HEK293T (cell line): ENCODE measurements at regions of chr2 and their contacts with region 1.

Region 1: DNA sequence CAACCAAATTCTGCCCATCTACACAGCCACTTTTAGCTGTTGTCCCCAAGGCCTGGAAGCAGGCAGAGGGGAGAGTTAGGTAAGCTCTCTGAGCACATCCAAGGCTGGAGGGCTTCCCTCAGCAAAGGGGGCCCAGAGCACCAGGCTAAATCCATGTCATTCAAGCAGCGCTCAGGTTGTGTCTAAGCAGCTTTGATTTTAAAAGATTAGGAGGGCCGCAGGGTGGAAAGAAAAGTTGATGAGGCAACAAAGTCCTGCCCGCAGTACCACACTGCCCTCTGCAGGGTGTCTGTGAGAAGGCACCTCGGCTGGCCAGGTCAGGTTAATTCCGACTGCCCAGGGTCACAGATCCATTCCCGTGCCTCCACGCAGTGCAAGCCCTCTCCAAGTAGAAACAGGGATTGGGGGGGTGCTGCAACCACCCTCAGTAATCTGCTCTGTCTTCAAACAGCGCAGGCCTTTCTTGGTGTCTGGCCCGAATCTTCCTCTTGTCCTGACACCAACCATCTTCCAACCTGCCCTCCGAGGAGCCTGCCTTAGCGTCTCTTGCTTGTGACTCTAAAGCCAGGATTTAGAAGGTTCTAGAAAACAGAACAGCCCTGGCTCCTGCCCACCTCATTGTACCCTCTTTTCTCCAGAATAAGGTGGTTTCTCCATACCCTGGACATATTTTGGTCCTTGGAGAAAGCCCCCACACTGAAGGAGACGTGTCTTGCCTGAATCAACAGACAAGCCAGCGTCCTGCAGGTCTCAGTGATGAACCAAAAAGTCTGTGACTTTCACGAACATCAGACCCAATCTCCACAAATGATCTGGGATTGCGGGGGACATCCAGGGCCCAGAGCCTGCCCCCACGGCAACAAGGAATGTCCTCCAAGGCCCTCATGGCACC is 289.2 kb downstream of the TNS1 start:
- DNase-seq: peak; percentile 83

Region 2: GRCh38 chr2:217650716-217651360 is 62.8 kb before region 1 on chr2:
- CTCF ChIA-PET with region 1: interaction called, 11 read pairs
- POLR2A ChIA-PET with region 1: no interaction called
- DNase-seq: peak; percentile 73

Region 3: DNA sequence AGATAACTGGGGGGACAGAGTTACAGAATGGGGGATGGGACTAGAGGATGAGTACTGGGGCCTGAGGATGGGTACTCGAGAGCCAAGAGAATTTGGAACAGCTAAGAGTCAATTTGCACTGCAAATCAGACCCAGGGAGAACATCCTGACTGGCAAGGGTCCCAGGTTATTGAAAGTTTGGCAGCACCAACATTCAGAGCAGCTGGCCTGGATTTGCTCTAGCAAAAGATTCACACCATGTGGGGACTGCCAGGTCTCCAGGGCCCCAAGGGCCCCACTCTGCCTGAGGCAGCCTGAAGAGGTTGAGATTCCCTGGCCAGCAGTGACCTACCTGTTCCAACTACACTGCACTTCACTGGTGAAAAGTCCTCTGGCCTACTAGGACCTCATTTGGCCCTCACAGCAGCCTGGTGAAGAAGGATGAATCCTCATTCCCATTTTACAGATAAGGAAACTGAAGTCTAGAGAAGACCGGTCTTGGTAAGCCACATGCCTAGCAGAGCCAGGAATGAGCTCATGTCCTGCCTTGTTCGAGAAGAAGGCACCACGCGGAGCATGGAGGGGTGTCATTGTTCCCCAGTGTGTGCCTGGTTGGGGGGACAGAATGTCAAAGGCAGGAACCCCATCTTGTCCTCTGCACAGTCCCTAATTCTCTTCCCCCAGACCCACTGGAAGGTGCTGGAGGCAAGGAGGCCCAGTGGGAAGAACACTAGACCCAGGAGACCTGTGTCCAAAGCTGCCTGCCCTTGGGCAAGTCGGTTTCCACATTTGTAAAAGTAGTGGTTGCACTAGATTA is 30.5 kb after region 1 on chr2:
- CTCF ChIA-PET with region 1: no interaction called
- POLR2A ChIA-PET with region 1: no interaction called
- DNase-seq: no peak